ENCODE measurements at regions of chr11 and their contacts with region 1.

Region 1: GRCh38 chr11:6353367-6353987 is 33.2 kb upstream of the CAVIN3 start:
- DNase-seq: no peak
- H3K4me3 ChIP-seq: no peak overlapping the region
- H3K27ac ChIP-seq: no peak overlapping the region
- H3K4me1 ChIP-seq: peaks cover 5 to 27% (median 22%) of the 10 kb centered on the region in 4 donors
- H3K27me3 ChIP-seq: no peaks in the 10 kb centered on the region
- CTCF ChIP-seq: peak; percentile 74 to 94 (median 83)
- EP300 ChIP-seq: no peak
- POLR2A ChIP-seq: no peak

Region 2: GRCh38 chr11:6022956-6023355 is 330.5 kb before region 1 on chr11:
- intact Hi-C with region 1: loop called (anchors 2 kb)
- DNase-seq: no peak
- H3K4me3 ChIP-seq: no peak overlapping the region
- H3K27ac ChIP-seq: no peak overlapping the region
- H3K4me1 ChIP-seq: no peaks in the 10 kb centered on the region
- H3K27me3 ChIP-seq: no peaks in the 10 kb centered on the region
- CTCF ChIP-seq: peak; percentile 42 to 60 (median 45)
- EP300 ChIP-seq: no peak
- POLR2A ChIP-seq: no peak

Region 3: GRCh38 chr11:6096427-6096826 is 257.1 kb before region 1 on chr11:
- intact Hi-C with region 1: no loop called
- DNase-seq: no peak
- H3K4me3 ChIP-seq: no peak overlapping the region
- H3K27ac ChIP-seq: no peak overlapping the region
- H3K4me1 ChIP-seq: no peaks in the 10 kb centered on the region
- H3K27me3 ChIP-seq: no peaks in the 10 kb centered on the region
- CTCF ChIP-seq: no peak
- EP300 ChIP-seq: no peak
- POLR2A ChIP-seq: no peak

Region 4: GRCh38 chr11:6298605-6299004 is 54.9 kb before region 1 on chr11:
- intact Hi-C with region 1: loop called (anchors 5 kb)
- DNase-seq: no peak
- H3K4me3 ChIP-seq: no peak overlapping the region
- H3K27ac ChIP-seq: no peak overlapping the region
- H3K4me1 ChIP-seq: no peaks in the 10 kb centered on the region
- H3K27me3 ChIP-seq: no peaks in the 10 kb centered on the region
- CTCF ChIP-seq: peak in 1 of 3 experiments; percentile 38
- EP300 ChIP-seq: no peak
- POLR2A ChIP-seq: no peak

Region 5: GRCh38 chr11:6315811-6316425 is 37.6 kb before region 1 on chr11:
- intact Hi-C with region 1: loop called (anchors 5 kb)
- DNase-seq: no peak
- H3K4me3 ChIP-seq: peak overlapping the region in 3 of 4 donors; percentile 16 to 43 (median 20)
- H3K27ac ChIP-seq: peak overlapping the region in 3 of 4 donors; percentile 37 to 99 (median 98)
- H3K4me1 ChIP-seq: peaks cover 24 to 39% (median 38%) of the 10 kb centered on the region in 4 donors
- H3K27me3 ChIP-seq: no peaks in the 10 kb centered on the region
- CTCF ChIP-seq: peak; percentile 84 to 94 (median 84)
- EP300 ChIP-seq: no peak
- POLR2A ChIP-seq: no peak